Activated T-helper 2 cell treated with anti-CD3 and anti-CD28 coated beads, Interferon-gamma antibody, Interleukin-2, Interleukin-4, amounts not matched to agents 10 μg/mL and 5 μg/mL and 100 μg/mL, durations not matched to agents 14 hours and 24 hours and 36 hours (primary cell): ENCODE measurements at regions of chr2 and their contacts with region 1.

Region 1: DNA sequence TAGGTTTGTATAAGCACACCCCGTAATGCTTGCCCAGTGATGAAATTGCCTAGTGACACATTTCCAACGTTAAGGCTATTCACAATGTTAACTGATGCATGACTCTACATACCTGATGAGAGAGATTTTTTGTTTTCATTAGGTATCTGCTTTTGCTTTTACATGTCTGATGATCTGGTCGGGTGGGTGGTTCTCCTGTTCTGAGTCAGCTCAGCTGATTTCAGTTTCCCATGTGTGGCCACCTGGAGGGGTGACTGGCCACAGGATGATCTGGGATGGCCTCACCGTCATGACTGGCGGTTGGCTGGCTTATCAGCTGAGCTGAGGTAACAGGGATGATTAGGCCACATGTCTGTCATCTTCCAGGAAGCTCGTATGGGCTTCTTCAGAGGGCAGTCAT is 33.8 kb upstream of the ACYP2 start:
- DNase-seq: peak; percentile 33
- H3K4me3 Mint-ChIP-seq: no peak overlapping the region
- H3K27ac Mint-ChIP-seq: no peak overlapping the region
- H3K4me1 Mint-ChIP-seq: peaks cover 15% of the 10 kb centered on the region
- H3K27me3 Mint-ChIP-seq: no peaks in the 10 kb centered on the region

Region 2: DNA sequence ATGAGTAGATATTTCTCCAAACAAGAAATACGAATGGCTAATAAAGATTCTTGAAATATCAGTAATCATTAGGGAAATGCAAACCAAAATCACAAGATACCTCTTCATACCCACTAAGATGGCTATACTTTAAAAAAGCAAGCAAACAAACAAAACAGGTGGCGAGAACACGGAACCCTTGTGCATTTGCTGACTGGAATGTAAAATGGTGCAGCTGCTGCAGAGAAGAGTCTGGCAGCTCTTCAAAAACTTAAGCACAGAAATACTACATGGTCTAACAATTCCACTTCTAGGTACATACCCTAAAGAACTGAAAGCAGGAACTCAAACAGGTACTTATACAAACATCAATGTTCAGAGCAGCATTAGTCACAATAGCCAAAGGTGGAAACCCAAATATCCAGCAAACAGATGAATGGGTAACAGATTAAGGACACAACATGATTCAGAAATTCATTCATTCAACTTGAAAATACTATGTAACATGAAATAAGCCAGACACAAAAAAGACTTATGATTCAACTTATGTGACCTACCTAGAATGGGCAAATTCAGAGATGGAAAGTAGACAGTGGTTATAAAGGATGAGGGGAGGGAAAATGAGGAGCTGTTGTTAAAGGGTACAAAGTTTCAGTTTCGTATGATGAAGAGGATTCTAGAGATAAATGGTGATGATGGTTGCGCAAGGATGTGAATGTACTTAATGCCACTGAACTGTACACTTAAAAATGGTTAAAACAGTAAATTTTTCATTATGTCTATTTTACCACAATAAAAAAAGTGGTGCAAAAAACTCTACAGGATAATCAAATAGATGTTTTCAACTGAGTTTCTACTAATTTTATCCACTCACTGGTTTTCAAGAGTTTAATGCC is 194.9 kb before region 1 on chr2:
- intact Hi-C with region 1: loop called (anchors 5 kb)
- DNase-seq: no peak
- H3K4me3 Mint-ChIP-seq: no peak overlapping the region
- H3K27ac Mint-ChIP-seq: peak overlapping the region; percentile 47
- H3K4me1 Mint-ChIP-seq: peaks cover 43% of the 10 kb centered on the region
- H3K27me3 Mint-ChIP-seq: no peaks in the 10 kb centered on the region

Region 3: DNA sequence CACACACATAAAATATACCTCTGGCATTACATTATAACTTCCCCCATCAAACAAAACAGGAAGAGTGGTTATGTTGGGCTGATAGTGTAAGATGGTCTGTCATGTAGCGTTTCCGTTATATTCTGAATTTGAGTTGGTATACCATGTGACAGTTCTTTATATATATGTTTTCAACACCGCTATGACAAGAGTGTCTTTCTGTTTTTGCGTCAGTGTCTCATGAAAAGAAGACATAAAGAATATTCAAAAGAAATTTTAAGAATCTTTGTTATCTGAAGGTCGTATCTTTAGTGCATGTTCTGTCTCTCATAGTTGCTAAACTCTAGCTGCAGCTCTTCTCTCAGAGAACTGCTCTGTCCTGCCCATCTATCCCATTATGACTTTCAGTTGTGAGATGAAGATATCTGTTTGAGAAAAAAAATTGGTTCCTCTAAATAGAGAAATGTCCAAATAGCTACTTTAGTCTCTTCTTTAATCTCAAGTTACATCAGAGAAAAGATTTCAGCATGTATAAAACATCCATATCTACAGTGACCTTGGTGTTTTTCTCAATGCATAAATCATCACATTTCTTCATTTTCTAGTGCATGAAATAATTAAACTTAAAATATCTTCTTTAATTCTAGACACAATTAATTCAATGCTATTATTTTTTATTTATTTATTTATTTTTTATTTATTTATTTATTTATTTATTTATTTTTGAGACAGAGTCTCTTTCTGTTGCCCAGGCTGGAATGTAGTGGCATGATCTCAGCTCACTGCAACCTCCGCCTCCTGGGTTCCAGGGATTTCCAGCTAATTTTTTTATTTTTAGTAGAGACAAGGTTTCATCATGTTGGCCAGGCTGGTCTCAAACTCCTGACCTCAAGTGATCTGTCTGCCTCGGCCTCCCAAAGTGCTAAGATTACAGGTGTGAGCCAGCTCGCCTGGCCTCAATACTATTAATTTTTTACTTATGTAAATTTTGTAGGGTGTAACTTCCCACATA is 86.5 kb before region 1 on chr2:
- intact Hi-C with region 1: loop called (anchors 1 kb)
- DNase-seq: no peak
- H3K4me3 Mint-ChIP-seq: peak overlapping the region; percentile 43
- H3K27ac Mint-ChIP-seq: peak overlapping the region; percentile 72
- H3K4me1 Mint-ChIP-seq: peaks cover 19% of the 10 kb centered on the region
- H3K27me3 Mint-ChIP-seq: no peaks in the 10 kb centered on the region

Region 4: GRCh38 chr2:54041135-54041534 is 40.4 kb before region 1 on chr2:
- intact Hi-C with region 1: loop called (anchors 5 kb)
- DNase-seq: no peak
- H3K4me3 Mint-ChIP-seq: no peak overlapping the region
- H3K27ac Mint-ChIP-seq: no peak overlapping the region
- H3K4me1 Mint-ChIP-seq: no peaks in the 10 kb centered on the region
- H3K27me3 Mint-ChIP-seq: no peaks in the 10 kb centered on the region

Region 5: GRCh38 chr2:54054271-54054670 is 27.3 kb before region 1 on chr2:
- intact Hi-C with region 1: loop called (anchors 2 kb)
- DNase-seq: no peak
- H3K4me3 Mint-ChIP-seq: peak overlapping the region; percentile 27
- H3K27ac Mint-ChIP-seq: peak overlapping the region; percentile 21
- H3K4me1 Mint-ChIP-seq: peaks cover 26% of the 10 kb centered on the region
- H3K27me3 Mint-ChIP-seq: no peaks in the 10 kb centered on the region